Activated T-helper 1 cell treated with anti-CD3 and anti-CD28 coated beads, Interleukin-12 subunit alpha, Interleukin-12 subunit beta, Interleukin-2, Interleukin-4 antibody, amounts not matched to agents 30 ng/mL and 10 ng/mL and 1 ng/mL, durations not matched to agents 14 hours and 24 hours and 36 hours (primary cell): ENCODE measurements at regions of chrX and their contacts with region 1.

Region 1: GRCh38 chrX:102899940-102900916 is 36.8 kb upstream of the RAB40AL start:
- DNase-seq: peak; percentile 43
- H3K4me3 Mint-ChIP-seq: no peak overlapping the region
- H3K27ac Mint-ChIP-seq: no peak overlapping the region
- H3K4me1 Mint-ChIP-seq: peaks cover 9% of the 10 kb centered on the region
- H3K27me3 Mint-ChIP-seq: no peaks in the 10 kb centered on the region

Region 2: GRCh38 chrX:102067966-102068708 is 832.1 kb before region 1 on chrX:
- intact Hi-C with region 1: loop called (anchors 2 kb)
- DNase-seq: no peak
- H3K4me3 Mint-ChIP-seq: no peak overlapping the region
- H3K27ac Mint-ChIP-seq: no peak overlapping the region
- H3K4me1 Mint-ChIP-seq: no peaks in the 10 kb centered on the region
- H3K27me3 Mint-ChIP-seq: no peaks in the 10 kb centered on the region

Region 3: GRCh38 chrX:102832661-102833060 is 67.6 kb before region 1 on chrX:
- intact Hi-C with region 1: no loop called
- DNase-seq: no peak
- H3K4me3 Mint-ChIP-seq: no peak overlapping the region
- H3K27ac Mint-ChIP-seq: no peak overlapping the region
- H3K4me1 Mint-ChIP-seq: no peaks in the 10 kb centered on the region
- H3K27me3 Mint-ChIP-seq: no peaks in the 10 kb centered on the region